ENCODE measurements at regions of chr14 and their contacts with region 1.

Region 1: DNA sequence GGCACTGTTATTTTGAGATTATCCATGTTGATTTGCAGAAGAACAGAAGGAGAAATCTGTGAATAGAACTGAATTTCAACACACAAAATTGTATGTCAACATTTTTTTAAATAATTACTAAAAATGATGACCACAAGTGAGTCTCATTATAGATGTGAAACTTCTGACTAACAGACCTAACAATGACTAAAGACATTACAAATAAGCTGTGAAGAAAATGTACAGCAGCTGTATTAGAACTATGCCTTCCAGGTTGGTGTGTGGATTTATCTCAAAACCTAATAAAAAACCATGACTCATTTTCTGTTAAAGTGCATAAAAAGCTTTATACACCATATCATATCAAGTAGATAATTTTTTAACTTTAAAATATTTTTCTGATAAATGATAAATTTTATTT is 22.5 kb upstream of the FOXG1 start:
- DNase-seq: no peak
- H3K4me3 Mint-ChIP-seq: no peak overlapping the region
- H3K27ac Mint-ChIP-seq: no peak overlapping the region
- H3K4me1 Mint-ChIP-seq: peaks cover 23% of the 10 kb centered on the region
- H3K27me3 Mint-ChIP-seq: no peaks in the 10 kb centered on the region
- CTCF ChIP-seq: no peak

Region 2: GRCh38 chr14:28488658-28489057 is 255.5 kb before region 1 on chr14:
- CTCF ChIA-PET with region 1: no interaction called
- intact Hi-C with region 1: no loop called
- DNase-seq: no peak
- H3K4me3 Mint-ChIP-seq: no peak overlapping the region
- H3K27ac Mint-ChIP-seq: no peak overlapping the region
- H3K4me1 Mint-ChIP-seq: no peaks in the 10 kb centered on the region
- H3K27me3 Mint-ChIP-seq: no peaks in the 10 kb centered on the region
- CTCF ChIP-seq: no peak

Region 3: DNA sequence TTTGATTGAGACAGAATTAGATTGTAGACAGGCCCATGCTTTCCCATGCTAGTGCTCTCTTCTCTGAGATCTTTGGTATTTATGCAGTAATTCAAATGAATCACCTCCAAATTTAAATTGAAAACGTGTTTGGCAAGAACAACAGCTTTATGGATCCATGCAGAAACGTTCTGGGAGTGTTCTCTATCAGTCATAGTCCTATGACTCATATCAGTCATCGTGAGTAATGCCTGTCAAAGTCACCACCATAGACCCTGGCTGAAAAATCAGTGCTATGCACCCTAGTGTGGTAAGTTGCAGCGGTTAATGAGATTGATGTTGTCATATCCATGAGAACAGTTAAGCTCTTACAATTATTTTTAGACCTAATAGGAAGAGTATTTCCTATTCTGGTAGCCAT is 67.6 kb before region 1 on chr14:
- CTCF ChIA-PET with region 1: no interaction called
- intact Hi-C with region 1: loop called (anchors 5 kb)
- DNase-seq: peak; percentile 50
- H3K4me3 Mint-ChIP-seq: peak overlapping the region; percentile 14
- H3K27ac Mint-ChIP-seq: peak overlapping the region; percentile 82
- H3K4me1 Mint-ChIP-seq: peaks cover 35% of the 10 kb centered on the region
- H3K27me3 Mint-ChIP-seq: no peaks in the 10 kb centered on the region
- CTCF ChIP-seq: no peak

Region 4: GRCh38 chr14:28681683-28682082 is 62.4 kb before region 1 on chr14:
- CTCF ChIA-PET with region 1: no interaction called
- intact Hi-C with region 1: loop called (anchors 5 kb)
- DNase-seq: no peak
- H3K4me3 Mint-ChIP-seq: no peak overlapping the region
- H3K27ac Mint-ChIP-seq: no peak overlapping the region
- H3K4me1 Mint-ChIP-seq: peaks cover 17% of the 10 kb centered on the region
- H3K27me3 Mint-ChIP-seq: no peaks in the 10 kb centered on the region
- CTCF ChIP-seq: no peak

Region 5: GRCh38 chr14:28754209-28754985 is 10.3 kb after region 1 on chr14:
- CTCF ChIA-PET with region 1: no interaction called
- intact Hi-C with region 1: no loop called
- DNase-seq: peak; percentile 52
- H3K4me3 Mint-ChIP-seq: peak overlapping the region; percentile 8
- H3K27ac Mint-ChIP-seq: no peak overlapping the region
- H3K4me1 Mint-ChIP-seq: peaks cover 18% of the 10 kb centered on the region
- H3K27me3 Mint-ChIP-seq: peaks cover 50% of the 10 kb centered on the region
- CTCF ChIP-seq: peak; percentile 44

Measured in Calu3 (cell line).